HEK293 (cell line): ENCODE measurements at regions of chr1 and their contacts with region 1.

Region 1: DNA sequence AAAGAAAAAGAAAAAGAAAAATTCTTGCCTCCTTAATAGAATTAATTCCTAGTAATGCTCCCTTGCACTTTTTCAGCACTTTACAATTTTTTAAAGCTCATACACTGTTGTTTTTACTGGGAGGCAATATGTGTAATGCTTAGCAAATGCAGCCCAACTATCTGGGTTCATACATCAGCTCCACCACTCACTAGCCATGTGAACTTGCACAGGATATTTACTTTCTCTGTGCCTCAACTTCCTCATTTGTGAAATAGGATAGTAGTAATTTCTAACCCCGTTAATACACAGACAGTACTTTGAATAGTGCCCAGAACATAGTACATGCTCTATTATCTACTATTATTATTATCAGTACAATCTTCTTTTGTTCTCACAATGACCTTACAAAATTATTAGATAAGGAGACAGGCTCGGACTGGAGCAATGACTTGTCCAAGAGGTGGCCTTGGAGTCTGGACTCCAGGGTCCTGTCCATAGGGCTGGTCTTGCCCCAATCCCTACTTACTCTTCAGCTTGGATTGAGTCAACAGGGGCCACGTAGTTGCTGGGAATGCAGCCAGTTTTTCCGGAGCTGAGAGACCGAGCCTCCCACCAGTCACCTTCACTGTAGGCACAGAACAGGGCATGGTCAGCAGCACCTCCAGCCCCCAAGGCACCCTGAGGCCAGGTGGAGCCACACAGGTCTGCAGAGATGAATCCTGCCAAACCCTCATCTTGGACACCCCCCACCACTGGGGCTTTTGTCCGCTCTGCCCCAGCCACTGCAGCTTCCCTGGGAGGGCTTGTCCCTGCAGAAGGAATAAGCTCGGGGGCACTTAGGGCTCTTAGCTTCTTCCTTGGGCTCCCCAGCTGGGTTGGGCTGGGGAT is 13.7 kb downstream of the FGR start:
- H3K4me3 ChIP-seq: no peak overlapping the region
- H3K27ac ChIP-seq: no peak overlapping the region
- H3K4me1 ChIP-seq: no peaks in the 10 kb centered on the region
- CTCF ChIP-seq: no peak

Region 2: DNA sequence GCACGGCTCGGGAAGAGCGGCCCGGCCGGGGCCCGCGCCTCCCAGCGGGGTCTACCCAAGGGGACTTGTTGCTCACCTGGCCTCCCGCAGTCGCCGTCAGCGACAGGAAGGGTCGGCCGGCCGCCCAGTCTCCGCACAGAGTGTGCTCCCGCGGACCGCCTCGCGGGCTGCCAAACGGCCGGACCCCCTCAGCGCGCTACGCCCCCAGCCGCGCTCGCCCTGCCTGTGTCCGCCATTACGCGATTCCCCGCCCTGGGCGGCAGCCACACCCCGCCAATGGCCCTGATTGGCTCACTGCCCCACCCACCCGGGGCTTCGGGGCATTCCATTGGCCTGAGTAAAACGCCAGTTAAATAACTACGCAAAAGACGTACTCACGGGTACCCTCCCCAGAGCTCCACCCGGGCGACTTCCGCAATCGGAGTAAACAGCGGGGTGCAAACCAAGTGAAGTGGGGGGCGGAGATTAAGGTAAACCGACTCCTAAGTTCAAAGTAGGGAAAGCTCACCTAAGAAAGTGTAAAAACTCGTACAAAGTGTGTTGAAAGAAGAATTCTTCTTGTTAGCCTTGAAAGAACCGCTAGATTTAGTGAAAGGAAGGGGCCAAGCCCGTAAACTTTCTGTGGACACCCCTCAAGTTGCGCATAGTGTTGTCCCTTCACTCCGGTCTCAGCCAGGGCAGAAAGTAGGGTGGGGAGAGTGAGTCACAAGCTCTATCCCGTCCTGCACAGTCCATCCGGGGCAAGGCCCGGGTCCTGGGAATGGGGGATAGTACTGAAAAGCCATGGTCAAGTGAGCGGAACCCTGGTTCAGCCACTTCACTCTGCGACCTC is 131.2 kb before region 1 on chr1 and contains the start of gene WASF2:
- CTCF ChIA-PET with region 1: no interaction called
- POLR2A ChIA-PET with region 1: interaction called, 11 read pairs
- H3K4me3 ChIP-seq: peak within 1 kb of the TSS; percentile 86
- H3K27ac ChIP-seq: peak within 1 kb of the TSS; percentile 81
- H3K4me1 ChIP-seq: peaks cover 3% of the 10 kb centered on the region; the same call in 1 of the 2 replicates
- CTCF ChIP-seq: peak; percentile 54; the same call in 1 of the 2 replicates

Region 3: DNA sequence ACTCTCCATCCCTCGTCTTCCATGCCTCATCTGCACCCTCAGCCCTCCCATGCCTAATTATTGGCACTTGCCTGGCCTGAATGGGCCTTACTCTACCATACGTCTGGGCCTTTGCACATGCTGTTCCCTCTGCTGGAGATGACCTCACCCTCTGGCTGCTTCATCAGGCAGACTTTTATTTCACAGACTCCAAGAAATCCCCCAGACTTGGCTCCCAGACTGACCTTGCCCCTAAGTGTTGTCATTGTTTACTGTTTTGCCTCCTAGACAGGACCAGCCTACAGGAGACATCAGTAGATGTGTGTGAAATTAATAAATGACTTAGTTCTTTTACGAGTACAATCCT is 12.1 kb before region 1 on chr1:
- CTCF ChIA-PET with region 1: interaction called, 16 read pairs
- POLR2A ChIA-PET with region 1: interaction called, 4 read pairs
- H3K4me3 ChIP-seq: no peak overlapping the region
- H3K27ac ChIP-seq: no peak overlapping the region
- H3K4me1 ChIP-seq: no peaks in the 10 kb centered on the region
- CTCF ChIP-seq: no peak